ENCODE measurements at regions of chr19 and their contacts with region 1.

Region 1: DNA sequence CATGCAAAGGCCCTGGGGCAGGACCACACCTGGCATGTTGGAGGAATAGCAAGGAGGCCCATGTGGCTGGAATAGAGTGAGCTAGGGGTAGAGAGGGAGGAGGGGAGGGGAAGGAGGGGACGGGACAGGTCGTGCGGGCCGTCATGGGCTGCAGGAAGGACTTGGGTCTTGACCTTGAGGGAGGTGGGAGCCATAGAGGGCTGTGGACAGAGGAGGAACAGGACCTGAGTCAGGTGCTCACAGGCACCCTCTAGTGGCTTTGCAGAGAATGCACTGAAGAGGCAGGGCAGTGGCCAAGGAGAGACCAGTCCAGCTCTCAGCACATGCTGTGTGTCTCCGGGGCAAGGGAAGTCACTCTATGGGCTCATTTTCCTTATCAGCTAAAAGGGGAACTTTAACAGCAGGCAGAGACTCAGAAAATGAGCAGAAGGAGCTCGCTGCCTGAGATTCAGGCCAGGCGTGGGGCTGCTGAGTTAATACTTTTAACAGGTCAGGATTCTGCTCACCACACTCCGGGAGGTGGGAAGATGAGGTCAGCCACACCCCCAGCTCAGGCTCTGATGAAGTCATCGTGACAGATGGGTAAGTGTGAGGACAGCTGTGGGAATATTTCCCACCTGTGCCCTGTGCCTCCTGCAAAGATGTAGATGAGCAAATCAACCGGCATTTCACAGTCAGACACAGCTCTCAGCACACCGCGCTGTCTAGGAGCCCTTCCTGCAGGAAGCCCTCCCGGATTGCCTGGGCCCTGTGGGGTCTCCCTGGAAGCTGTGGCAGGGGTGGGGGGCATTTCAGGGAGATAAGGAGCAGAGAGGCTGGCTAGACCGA is 6.0 kb upstream of the TNFAIP8L1 start:
- DNase-seq: peak; percentile 72
- ATAC-seq: peak; percentile 40 to 74

Region 2: GRCh38 chr19:4208385-4209094 is 424.8 kb before region 1 on chr19:
- intact Hi-C with region 1: no loop called
- DNase-seq: no peak
- ATAC-seq: no peak

Region 3: DNA sequence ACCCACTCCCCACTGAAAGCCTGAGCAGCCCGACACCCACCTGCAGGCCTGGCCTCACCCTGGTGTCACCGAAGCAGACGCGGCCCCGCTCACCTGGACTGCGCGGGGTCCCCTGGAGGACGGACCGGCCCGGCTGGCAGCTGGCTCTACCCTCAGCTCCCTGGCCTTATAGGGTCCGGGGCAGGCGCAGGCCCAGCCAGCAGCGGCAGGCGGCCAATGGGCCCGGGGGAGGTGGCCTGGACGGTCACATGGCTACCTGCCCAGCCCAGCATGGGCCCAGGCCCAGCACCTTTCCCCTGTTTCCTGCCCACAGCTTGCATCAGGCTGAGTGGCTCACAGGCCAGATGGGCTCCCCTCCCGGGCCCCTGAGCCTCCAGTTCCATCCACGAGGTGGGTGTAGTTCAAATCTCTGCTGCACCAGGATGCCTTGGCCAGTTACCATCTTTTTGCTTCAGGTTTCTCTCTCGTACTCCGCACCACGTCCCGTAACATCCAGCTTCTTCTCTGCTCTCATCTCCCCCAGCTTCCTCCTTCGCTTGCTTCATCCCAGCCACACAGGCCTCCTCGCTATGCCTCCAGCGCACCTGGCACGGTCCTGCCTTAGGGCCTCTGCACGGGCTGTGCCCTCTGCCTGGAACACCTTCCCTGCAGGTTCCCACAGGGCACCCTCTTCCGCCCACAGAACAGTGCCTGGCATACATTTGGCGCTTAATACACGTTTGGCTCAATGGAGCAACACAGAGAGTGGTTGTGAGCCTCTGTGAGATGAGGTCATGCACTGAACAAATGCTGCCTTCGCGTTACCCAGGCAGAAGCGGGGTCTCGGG is 114.8 kb before region 1 on chr19 and contains the start of gene PLIN4:
- intact Hi-C with region 1: no loop called
- DNase-seq: peak; percentile 82
- ATAC-seq: peak; percentile 80 to 91
- total RNA-seq, gene PLIN4: 331 to 357 TPM

Region 4: DNA sequence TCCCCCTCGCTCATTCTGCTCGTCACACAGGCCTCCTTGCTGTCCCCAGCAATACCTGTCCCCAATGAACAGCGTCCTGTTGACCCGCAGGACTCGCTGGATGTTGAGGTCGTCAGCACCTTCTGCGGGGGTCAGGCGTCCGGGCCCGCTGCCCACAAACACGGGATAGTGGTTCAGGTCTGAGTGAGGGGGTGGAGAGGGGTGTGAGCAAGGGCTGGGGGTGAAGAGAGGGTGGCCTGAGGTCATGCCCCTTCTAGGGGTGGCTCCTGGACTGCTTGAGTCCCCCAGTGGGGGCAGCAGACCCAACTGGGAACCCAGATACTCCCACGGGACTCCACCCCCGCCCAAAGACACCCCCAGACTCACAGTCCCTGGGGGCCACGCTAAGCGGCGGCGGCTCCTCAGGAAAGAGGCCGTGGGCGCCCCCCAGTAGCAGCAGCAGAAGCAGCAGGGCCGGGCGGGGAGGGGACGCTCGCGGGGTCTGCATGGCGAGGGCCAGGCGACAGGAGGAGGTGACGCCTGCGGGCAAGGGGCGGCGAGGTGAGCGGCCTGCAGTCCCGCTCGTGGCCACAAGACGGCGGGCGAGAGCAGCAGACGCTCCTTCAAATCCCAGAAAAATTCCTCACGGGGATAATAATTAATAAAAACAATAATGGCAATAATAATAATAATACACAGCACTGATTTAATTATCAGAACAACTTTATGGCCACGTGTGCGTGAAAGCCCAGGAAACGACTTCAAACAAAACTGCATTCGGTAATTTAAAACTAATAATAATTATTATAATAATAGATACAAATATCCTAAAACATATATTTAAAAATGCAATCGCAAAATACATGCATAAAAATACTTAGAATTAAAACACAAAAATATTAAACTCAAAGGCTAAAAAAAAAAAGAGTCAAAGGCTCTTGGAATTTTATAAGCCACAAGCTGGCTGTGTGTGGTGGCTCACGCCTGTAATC is 75.1 kb before region 1 on chr19:
- intact Hi-C with region 1: loop called (anchors 2 to 5 kb)
- DNase-seq: no peak
- ATAC-seq: peak in 1 of 2 donors; percentile 7

Region 5: GRCh38 chr19:4576016-4576933 is 57.1 kb before region 1 on chr19:
- intact Hi-C with region 1: loop called (anchors 5 kb)
- DNase-seq: peak; percentile 71
- ATAC-seq: peak; percentile 28 to 48

Region 6: DNA sequence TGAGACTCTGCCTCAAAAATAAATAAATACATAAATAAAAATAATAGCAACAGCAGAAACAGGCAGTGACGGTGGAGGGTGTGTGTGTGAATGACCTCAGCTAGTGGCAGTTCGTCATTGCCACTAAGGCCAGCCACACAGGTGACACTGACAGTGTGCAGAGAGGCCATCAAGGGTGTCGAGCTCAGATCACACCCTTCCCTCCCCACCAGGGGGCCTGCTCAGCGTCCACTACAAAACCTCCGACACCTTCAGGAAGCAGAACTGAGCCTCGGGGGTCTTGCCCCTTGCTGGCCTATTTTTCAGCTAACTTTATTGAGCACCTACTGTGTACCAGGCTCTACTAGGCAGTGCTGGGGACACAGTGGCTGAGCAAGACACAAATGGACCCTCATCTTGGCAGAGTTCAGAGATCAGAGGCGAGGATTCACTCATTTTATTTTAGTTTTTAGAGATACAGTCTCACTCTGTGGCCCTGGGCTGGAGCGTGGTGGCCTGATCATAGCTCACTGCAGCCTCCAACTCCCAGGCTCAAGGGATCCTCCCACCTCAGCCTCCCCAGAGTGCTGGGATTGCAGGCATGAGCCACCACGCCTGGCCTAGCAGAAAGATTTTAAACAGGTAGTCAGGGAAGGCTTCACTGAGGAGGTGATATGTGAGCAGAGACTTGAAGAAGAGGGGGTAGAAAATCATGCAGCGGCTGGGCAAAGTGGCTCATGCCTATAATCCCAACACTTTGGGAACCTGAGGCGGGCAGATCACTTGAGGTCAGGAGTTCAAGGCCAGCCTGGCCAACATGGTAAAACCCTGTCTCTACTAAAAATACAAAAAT is 43.6 kb before region 1 on chr19:
- intact Hi-C with region 1: loop called in 1 of 2 experiments (anchors 5 kb)
- DNase-seq: no peak
- ATAC-seq: peak; percentile 78 to 79